ENCODE measurements at regions of chr13 and their contacts with region 1.

Region 1: DNA sequence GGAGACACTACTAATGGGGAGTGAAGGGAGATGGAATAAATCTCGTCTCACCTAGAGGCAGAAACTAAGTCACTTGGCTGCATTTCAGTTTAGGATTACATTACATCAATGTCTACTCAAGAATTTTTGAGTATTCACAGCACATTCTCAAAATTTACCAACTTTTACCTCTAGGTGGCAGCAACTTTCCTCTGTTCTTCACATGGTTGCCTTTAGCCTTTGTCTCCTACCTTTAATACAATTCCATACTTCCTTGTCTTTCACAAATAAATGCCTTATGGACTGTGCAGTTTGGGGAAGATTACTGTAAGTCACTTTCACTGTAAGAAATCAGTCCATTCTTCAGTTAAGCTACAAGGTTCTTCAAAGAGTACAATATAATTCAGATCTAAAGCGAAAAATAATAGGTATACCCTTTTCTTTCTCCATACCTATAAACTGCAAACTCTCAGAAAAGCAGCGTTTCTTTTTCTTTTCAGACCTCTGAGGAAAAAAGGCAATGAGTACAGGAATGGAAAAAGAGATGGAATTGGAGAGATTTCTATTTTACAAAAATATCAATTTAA is 379.4 kb downstream of the KLF12 start:
- DNase-seq: no peak
- H3K4me3 ChIP-seq: no peak overlapping the region
- H3K27ac ChIP-seq: no peak overlapping the region
- H3K4me1 ChIP-seq: peaks cover 0 to 42% (median 20%) of the 10 kb centered on the region in 4 donors
- H3K27me3 ChIP-seq: no peaks in the 10 kb centered on the region
- CTCF ChIP-seq: peak; percentile 27 to 73 (median 62)
- EP300 ChIP-seq: no peak
- POLR2A ChIP-seq: no peak

Region 2: DNA sequence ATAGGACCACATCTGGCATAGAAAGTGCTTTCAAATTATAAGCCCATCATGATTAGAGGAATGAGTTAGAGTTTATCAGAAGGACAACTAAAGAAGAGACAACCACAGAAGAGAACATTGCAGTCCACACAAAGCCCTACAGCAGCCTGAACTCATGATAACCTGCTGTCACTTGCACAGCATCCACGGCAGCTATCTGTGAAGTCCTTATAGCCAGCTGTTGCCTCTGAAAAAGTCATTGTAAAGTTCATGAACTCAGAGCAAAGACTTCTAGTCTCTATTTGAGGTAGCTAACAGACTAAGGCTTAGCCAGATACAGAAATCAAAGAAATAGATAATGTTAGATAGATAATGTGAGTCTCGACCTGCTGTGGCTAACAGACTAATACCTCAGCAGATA is 246.0 kb before region 1 on chr13:
- intact Hi-C with region 1: no loop called
- DNase-seq: no peak
- H3K4me3 ChIP-seq: no peak overlapping the region
- H3K27ac ChIP-seq: no peak overlapping the region
- H3K4me1 ChIP-seq: no peaks in the 10 kb centered on the region
- H3K27me3 ChIP-seq: no peaks in the 10 kb centered on the region
- CTCF ChIP-seq: no peak
- EP300 ChIP-seq: no peak
- POLR2A ChIP-seq: no peak

Region 3: DNA sequence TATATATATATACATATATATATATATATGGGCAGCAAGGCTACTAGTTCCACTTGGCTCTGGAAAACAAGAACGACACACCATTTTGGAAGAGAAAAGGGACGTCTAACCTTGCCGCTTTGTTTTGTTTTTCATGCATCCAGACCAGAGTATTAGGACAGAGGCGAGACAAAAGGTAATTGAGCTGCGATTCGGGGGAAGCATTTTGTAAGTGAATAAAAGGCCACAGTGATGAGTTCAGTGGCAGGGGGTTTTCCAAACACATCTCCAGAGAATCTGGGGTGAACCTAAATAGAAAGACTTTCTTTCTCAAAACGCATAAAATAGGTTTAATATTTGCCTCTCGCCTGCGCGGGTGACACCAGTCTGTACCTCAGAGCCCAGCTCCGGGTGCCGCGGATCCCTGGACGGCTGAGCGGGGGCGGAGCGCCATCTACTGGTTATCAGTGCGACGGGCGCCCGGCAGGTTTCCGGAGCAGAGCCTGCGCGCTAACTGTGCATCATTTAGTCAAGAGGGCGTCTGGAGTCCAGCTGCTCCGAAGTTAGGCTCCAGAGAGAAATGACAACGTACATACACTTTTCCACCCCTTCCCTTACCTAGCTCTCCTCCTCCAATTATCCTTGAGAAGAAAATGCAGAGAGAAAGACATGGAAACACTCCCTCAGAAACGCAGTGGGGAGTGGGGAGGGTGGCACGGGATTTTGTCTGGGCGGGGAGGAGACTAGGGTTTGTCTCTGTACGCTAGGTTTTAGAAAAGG is 1464.8 kb after region 1 on chr13:
- intact Hi-C with region 1: loop called (anchors 10 kb)
- DNase-seq: peak; percentile 87
- H3K4me3 ChIP-seq: peak overlapping the region in 2 of 4 donors; percentile 18 to 23
- H3K27ac ChIP-seq: no peak overlapping the region
- H3K4me1 ChIP-seq: peaks cover 0 to 9% (median 2%) of the 10 kb centered on the region in 4 donors
- H3K27me3 ChIP-seq: peaks cover 0 to 4% (median 0%) of the 10 kb centered on the region in 3 donors
- CTCF ChIP-seq: peak; percentile 67 to 97 (median 78)
- EP300 ChIP-seq: no peak
- POLR2A ChIP-seq: no peak

Measured in sigmoid colon (tissue), 7 donors.